IMR-90 (cell line): ENCODE measurements at regions of chr11 and their contacts with region 1.

Region 1: GRCh38 chr11:94767761-94768601 is at the start of gene AMOTL1:
- DNase-seq: peak; percentile 76
- ATAC-seq: peak; percentile 90
- H3K4me3 ChIP-seq: peak within 1 kb of the TSS; percentile 98
- H3K27ac ChIP-seq: peak within 1 kb of the TSS; percentile 97
- H3K4me1 ChIP-seq: peaks cover 13% of the 10 kb centered on the region
- H3K27me3 ChIP-seq: no peaks in the 10 kb centered on the region
- CTCF ChIP-seq: no peak; the same call in 1 of the 2 replicates
- POLR2A ChIP-seq: no peak
- RAD21 ChIP-seq: peak; percentile 26; the same call in 1 of the 2 replicates
- total RNA-seq, gene AMOTL1: 49.5 and 58.6 TPM in 2 replicates

Region 2: DNA sequence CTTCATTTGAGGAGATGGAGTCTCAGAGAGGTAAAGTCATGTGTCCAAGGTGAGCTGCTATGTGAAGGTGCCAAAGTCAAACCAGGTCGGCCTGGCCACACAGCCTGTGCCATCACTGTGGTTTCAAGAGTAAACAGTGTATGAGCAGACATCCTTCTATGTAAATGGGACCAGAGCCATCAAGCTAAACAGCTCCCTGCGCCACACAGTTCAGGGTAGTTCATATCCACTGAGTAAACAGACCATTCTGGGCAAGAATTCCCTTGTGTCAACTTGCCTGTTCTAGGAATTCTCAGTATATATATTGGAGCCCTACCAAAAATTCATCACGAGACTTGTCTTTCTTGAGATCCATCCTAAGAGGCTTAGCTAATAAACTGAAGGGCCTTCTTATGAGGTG is 77.6 kb after region 1 on chr11:
- CTCF ChIA-PET with region 1: no interaction called
- POLR2A ChIA-PET with region 1: no interaction called
- dilution Hi-C with region 1: no loop called
- in situ Hi-C with region 1: no loop called
- intact Hi-C with region 1: loop called (anchors 5 kb)
- DNase-seq: peak; percentile 89
- ATAC-seq: peak; percentile 94
- H3K4me3 ChIP-seq: no peak overlapping the region
- H3K27ac ChIP-seq: peak overlapping the region; percentile 97; the same call in 1 of the 2 replicates
- H3K4me1 ChIP-seq: peaks cover 12% of the 10 kb centered on the region
- H3K27me3 ChIP-seq: no peaks in the 10 kb centered on the region
- CTCF ChIP-seq: no peak
- POLR2A ChIP-seq: no peak
- RAD21 ChIP-seq: no peak

Region 3: GRCh38 chr11:94876645-94877442 is 108.9 kb after region 1 on chr11:
- CTCF ChIA-PET with region 1: no interaction called
- POLR2A ChIA-PET with region 1: no interaction called
- dilution Hi-C with region 1: no loop called
- in situ Hi-C with region 1: no loop called
- intact Hi-C with region 1: loop called (anchors 1 kb)
- DNase-seq: peak; percentile 98
- ATAC-seq: peak; percentile 97
- H3K4me3 ChIP-seq: no peak overlapping the region
- H3K27ac ChIP-seq: peak overlapping the region; percentile 97
- H3K4me1 ChIP-seq: peaks cover 15% of the 10 kb centered on the region
- H3K27me3 ChIP-seq: no peaks in the 10 kb centered on the region
- CTCF ChIP-seq: peak; percentile 52
- POLR2A ChIP-seq: 0 out of 2 replicates have a peak, but pooled peaks have one; percentile 21
- RAD21 ChIP-seq: peak; percentile 62

Region 4: GRCh38 chr11:94975599-94975998 is 207.6 kb after region 1 on chr11:
- CTCF ChIA-PET with region 1: no interaction called
- POLR2A ChIA-PET with region 1: no interaction called
- dilution Hi-C with region 1: no loop called
- in situ Hi-C with region 1: no loop called
- intact Hi-C with region 1: no loop called
- DNase-seq: no peak
- ATAC-seq: no peak
- H3K4me3 ChIP-seq: no peak overlapping the region
- H3K27ac ChIP-seq: no peak overlapping the region
- H3K4me1 ChIP-seq: no peaks in the 10 kb centered on the region
- H3K27me3 ChIP-seq: no peaks in the 10 kb centered on the region
- CTCF ChIP-seq: no peak
- POLR2A ChIP-seq: no peak
- RAD21 ChIP-seq: no peak